Psoas muscle (tissue), 8 donors: ENCODE measurements at regions of chr12 and their contacts with region 1.

Region 1: GRCh38 chr12:10771132-10771733 is 31.2 kb downstream of the TAS2R7 start:
- DNase-seq: no peak
- ATAC-seq: peak; percentile 44 to 76 (median 62)
- H3K4me3 ChIP-seq: no peak overlapping the region
- H3K27ac ChIP-seq: no peak overlapping the region
- H3K4me1 ChIP-seq: no peaks in the 10 kb centered on the region
- H3K27me3 ChIP-seq: peaks cover 1 to 25% (median 6%) of the 10 kb centered on the region in 3 donors
- CTCF ChIP-seq: peak; percentile 80

Region 2: DNA sequence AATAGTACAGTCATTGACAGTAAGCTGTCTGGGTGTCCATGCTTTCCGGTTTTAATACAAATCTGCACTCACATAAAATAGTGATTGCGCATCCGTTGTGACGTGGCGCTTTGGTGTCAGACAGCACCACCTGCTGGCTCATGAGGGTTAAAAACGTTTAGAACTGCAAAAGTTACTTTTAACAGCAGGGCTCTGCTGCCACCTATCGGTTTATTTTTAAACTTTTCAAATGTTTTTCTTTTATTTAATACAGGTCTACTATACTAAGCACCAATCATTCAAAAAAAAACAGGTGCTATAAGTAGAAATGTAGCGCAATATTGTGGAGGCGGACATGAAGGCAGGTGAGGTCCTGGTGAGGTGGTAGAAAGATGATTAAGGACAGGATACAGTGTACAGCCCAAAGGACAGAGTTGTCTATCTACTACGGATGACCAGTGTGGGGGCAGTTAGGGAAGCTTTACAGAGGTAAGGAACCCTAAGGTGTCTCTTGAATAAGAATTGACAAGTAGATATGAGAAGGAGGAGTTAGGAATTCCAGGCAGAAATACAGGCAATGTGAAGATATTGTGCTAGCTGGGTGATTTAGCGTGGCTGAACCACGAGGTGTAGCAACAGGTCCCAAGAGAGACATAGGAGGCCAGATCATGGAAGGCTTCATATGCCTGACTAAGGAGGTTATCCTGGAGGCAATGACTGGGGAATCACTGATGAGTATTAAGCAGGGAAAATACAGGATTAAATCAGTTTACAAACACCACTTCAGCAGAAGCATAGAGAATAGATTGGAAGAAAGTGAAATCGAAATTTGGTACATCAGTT is 715.6 kb after region 1 on chr12:
- intact Hi-C with region 1: loop called (anchors 2 to 5 kb)
- DNase-seq: peak; percentile 71 to 74
- ATAC-seq: peak; percentile 76 to 94 (median 88)
- H3K4me3 ChIP-seq: no peak overlapping the region
- H3K27ac ChIP-seq: no peak overlapping the region
- H3K4me1 ChIP-seq: no peaks in the 10 kb centered on the region
- H3K27me3 ChIP-seq: no peaks in the 10 kb centered on the region
- CTCF ChIP-seq: peak; percentile 94